ENCODE measurements at regions of chr4 and their contacts with region 1.

Region 1: DNA sequence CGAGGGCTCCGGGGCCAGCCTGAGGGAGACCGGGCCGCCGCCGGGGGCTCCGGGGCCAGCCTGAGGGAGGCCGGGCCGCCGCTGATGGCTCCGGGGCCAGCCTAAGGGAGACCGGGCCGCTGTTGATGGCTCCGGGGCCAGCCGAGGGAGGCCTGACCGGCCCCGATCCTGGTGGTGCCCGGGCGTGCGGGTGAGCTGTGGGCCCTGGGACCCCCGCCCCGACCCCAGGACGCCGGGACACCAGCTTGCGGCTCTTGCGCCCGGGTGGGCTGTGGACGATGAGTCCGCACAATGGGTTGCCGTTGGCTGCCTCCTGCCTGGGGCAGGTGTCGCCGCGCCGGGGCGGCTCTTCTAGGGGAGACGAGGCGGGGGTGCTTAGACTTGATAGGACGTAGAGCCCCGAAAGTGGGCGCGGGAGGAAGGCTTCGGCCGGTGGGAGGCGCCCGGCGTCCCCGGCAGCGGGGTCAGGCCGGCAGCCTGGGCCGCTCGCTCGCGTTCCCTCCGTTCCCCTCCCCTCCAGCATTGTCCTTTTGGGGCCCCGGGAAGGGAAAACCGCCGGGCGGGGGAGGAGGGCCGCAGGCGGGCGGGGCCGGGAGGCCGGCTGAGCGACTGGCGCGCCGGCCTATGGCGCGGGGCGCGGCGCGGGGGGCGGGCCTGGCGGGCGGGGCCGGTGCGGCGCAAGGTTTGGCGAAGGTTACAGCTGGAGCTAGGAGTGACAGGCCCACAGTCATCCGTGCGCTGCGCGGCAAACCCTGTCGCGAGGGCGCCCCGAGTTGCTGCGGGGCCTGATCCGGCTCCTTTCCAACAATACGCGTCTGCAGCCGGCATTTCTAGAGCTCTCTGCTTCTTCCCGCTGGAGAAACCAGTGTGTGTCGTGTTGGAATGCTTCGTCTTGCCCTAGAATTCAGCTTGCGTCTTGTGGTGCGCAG is 790 bp downstream of the KIAA0232 start:
- DNase-seq: peak; percentile 88
- ATAC-seq: peak; percentile 67
- H3K4me3 Mint-ChIP-seq: peak overlapping the region; percentile 84
- H3K27ac Mint-ChIP-seq: peak overlapping the region; percentile 78
- H3K4me1 Mint-ChIP-seq: peaks cover 22% of the 10 kb centered on the region
- H3K27me3 Mint-ChIP-seq: no peaks in the 10 kb centered on the region
- CTCF ChIP-seq: no peak

Region 2: GRCh38 chr4:6640292-6641163 is 142.8 kb before region 1 on chr4 and contains the start of gene MRFAP1:
- CTCF ChIA-PET with region 1: no interaction called
- POLR2A ChIA-PET with region 1: interaction called, 11 read pairs
- intact Hi-C with region 1: loop called (anchors 1 kb)
- DNase-seq: peak; percentile 91
- ATAC-seq: peak; percentile 84
- H3K4me3 Mint-ChIP-seq: peak within 1 kb of the TSS; percentile 99
- H3K27ac Mint-ChIP-seq: peak within 1 kb of the TSS; percentile 100
- H3K4me1 Mint-ChIP-seq: peaks cover 36% of the 10 kb centered on the region
- H3K27me3 Mint-ChIP-seq: no peaks in the 10 kb centered on the region
- CTCF ChIP-seq: no peak
- total RNA-seq, gene MRFAP1: 93.8 and 93.9 TPM in 2 replicates

Region 3: GRCh38 chr4:6716018-6716911 is 67.1 kb before region 1 on chr4 and contains the start of gene BLOC1S4:
- CTCF ChIA-PET with region 1: interaction called, 5 read pairs
- POLR2A ChIA-PET with region 1: interaction called, 7 read pairs
- intact Hi-C with region 1: loop called (anchors 1 kb)
- DNase-seq: peak; percentile 87
- ATAC-seq: peak; percentile 85
- H3K4me3 Mint-ChIP-seq: peak within 1 kb of the TSS; percentile 91
- H3K27ac Mint-ChIP-seq: peak within 1 kb of the TSS; percentile 96
- H3K4me1 Mint-ChIP-seq: peaks cover 39% of the 10 kb centered on the region
- H3K27me3 Mint-ChIP-seq: peaks cover 3% of the 10 kb centered on the region
- CTCF ChIP-seq: no peak
- total RNA-seq, gene BLOC1S4: 19.8 and 20.3 TPM in 2 replicates

Region 4: GRCh38 chr4:6909073-6909965 is 126.0 kb after region 1 on chr4 and contains the start of gene TBC1D14:
- CTCF ChIA-PET with region 1: no interaction called
- POLR2A ChIA-PET with region 1: interaction called, 10 read pairs
- intact Hi-C with region 1: loop called (anchors 1 kb)
- DNase-seq: peak; percentile 88
- ATAC-seq: peak; percentile 89
- H3K4me3 Mint-ChIP-seq: peak within 1 kb of the TSS; percentile 87
- H3K27ac Mint-ChIP-seq: peak within 1 kb of the TSS; percentile 86
- H3K4me1 Mint-ChIP-seq: peaks cover 43% of the 10 kb centered on the region
- H3K27me3 Mint-ChIP-seq: peaks cover 5% of the 10 kb centered on the region
- CTCF ChIP-seq: no peak
- total RNA-seq, gene TBC1D14: 35.1 and 35.2 TPM in 2 replicates

Region 5: GRCh38 chr4:7103031-7103606 is 319.8 kb after region 1 on chr4:
- CTCF ChIA-PET with region 1: no interaction called
- POLR2A ChIA-PET with region 1: no interaction called
- intact Hi-C with region 1: loop called (anchors 1 kb)
- DNase-seq: peak; percentile 65
- ATAC-seq: peak; percentile 96
- H3K4me3 Mint-ChIP-seq: peak overlapping the region; percentile 91
- H3K27ac Mint-ChIP-seq: peak overlapping the region; percentile 46
- H3K4me1 Mint-ChIP-seq: peaks cover 20% of the 10 kb centered on the region
- H3K27me3 Mint-ChIP-seq: peaks cover under 1% of the 10 kb centered on the region
- CTCF ChIP-seq: no peak

Measured in activated B cell treated with CpG ODN at 0.5 μM for 24 hours (primary cell).